ENCODE measurements at regions of chr12 and their contacts with region 1.

Region 1: GRCh38 chr12:109995686-109996482 is at the start of gene GIT2:
- DNase-seq: peak; percentile 94
- H3K4me3 ChIP-seq: peak within 1 kb of the TSS; percentile 90
- H3K27ac ChIP-seq: peak within 1 kb of the TSS; percentile 72
- H3K4me1 ChIP-seq: no peaks in the 10 kb centered on the region
- H3K27me3 ChIP-seq: no peaks in the 10 kb centered on the region
- CTCF ChIP-seq: no peak
- total RNA-seq, gene GIT2: 23.3 to 26.8 TPM

Region 2: DNA sequence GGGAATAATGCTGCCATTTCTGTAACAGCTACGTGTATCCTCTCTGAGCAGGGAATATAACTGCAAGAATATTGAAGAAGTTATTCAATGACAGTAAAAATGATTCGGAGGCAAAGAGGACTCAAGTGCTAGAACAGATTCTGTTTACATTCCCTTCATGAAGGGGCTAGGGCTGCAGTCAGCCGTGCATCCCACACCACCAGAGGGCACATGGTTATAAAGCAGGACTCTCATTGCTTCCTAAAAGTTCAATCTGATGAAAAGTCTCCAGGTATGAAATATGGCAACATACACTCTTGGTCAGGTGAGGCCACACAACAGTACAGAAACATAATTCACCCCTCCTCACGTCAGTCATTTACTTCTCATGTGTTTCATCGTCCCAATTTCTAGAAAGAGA is 61.9 kb before region 1 on chr12:
- intact Hi-C with region 1: loop called (anchors 10 kb)
- DNase-seq: no peak
- H3K4me3 ChIP-seq: no peak overlapping the region
- H3K27ac ChIP-seq: no peak overlapping the region
- H3K4me1 ChIP-seq: no peaks in the 10 kb centered on the region
- H3K27me3 ChIP-seq: no peaks in the 10 kb centered on the region
- CTCF ChIP-seq: peak; percentile 23

Region 3: DNA sequence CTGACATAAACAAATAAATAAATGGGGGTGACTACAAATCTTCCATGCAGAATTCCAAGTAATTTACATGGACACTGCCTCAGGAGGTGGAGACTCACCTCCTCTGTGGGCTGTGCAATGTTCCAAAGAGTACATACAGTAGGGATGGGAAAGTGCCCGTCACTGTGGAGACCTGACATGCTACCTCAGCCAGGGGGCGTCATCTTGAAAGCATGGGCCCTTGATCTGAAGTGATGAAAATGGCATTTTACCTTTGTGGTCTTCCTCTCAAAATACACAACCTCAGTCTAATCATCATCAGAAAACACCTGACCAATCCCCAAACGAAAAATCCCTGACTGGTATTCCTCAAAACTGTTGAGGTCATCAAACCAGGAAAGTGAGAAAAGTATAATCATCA is 359.2 kb after region 1 on chr12:
- intact Hi-C with region 1: no loop called
- DNase-seq: no peak
- H3K4me3 ChIP-seq: no peak overlapping the region
- H3K27ac ChIP-seq: no peak overlapping the region
- H3K4me1 ChIP-seq: no peaks in the 10 kb centered on the region
- H3K27me3 ChIP-seq: no peaks in the 10 kb centered on the region
- CTCF ChIP-seq: no peak